ENCODE measurements at regions of chr11 and their contacts with region 1.

Region 1: DNA sequence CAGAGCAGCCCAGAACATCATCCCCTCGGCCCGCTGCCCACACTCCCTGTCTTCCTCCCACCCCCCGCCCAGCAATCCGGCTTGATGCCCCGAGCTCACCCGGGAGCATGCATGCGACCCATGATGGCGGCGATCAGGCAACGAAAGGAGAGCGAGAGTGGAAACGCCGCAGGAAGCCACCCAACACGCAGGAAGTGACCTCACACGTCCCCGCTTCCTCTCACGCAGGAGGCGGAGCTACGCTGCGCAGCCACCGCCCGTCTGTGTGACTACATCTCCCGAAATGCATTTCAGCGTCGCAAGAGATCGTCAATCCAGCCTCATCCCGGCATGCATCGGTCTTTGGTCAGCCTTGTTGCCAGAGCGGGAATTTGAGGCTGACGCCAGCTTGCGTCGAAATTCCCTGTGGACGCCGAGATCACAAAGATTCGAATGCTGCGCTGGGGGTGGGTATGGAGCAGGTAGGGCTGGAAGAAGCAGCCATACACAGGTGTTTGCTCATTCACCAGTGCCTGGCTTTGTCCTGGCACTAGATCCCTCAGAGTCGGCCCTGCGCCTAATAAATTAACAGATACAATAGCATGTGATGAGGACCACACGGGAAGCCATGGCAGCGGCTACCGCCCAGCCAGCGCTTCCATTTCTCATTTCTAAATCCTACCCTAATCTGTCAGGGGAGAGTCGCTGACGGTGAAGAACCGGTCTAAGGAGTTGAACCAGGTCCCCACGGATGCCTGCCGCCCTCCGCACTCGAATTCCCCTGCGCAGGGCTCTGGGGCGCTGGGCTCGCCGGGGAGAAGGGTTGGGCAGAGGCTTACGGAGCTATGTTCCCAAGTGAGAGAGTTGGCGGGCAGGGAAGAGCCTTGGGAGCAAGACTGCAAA is at the start of gene RPS13:
- DNase-seq: peak; percentile 94 to 97
- H3K4me3 ChIP-seq: peak within 1 kb of the TSS; percentile 99
- H3K27ac ChIP-seq: peak within 1 kb of the TSS; percentile 86
- H3K4me1 ChIP-seq: peaks cover 14% of the 10 kb centered on the region
- H3K27me3 ChIP-seq: no peaks in the 10 kb centered on the region
- CTCF ChIP-seq: no peak
- total RNA-seq, gene RPS13: 828 and 839 TPM in 2 replicates

Region 2: GRCh38 chr11:16713594-16713993 is 364.2 kb before region 1 on chr11:
- CTCF ChIA-PET with region 1: no interaction called
- POLR2A ChIA-PET with region 1: no interaction called
- intact Hi-C with region 1: no loop called
- DNase-seq: no peak
- H3K4me3 ChIP-seq: no peak overlapping the region
- H3K27ac ChIP-seq: no peak overlapping the region
- H3K4me1 ChIP-seq: no peaks in the 10 kb centered on the region
- H3K27me3 ChIP-seq: no peaks in the 10 kb centered on the region
- CTCF ChIP-seq: no peak

Region 3: DNA sequence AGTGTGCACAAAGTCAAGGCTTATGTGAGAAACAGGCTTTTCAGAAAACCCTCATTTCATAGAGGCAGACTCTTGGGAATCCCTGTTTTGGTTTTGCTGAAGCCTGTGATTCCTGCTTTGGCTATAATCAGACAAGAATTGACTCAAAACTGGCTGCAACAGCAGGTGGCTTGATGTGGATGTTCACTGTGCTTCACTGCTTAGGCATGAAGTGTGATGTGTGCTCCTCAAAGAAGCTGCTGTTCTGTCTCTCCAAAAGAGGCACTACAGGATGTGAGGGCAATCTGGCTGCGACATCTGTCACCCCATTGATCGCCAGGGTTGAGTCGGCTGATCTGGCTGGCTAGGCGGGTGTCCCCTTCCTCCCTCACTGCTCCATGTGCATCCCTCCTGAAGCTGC is 235.8 kb before region 1 on chr11:
- CTCF ChIA-PET with region 1: no interaction called
- POLR2A ChIA-PET with region 1: interaction called, 12 read pairs
- intact Hi-C with region 1: no loop called
- DNase-seq: no peak
- H3K4me3 ChIP-seq: no peak overlapping the region
- H3K27ac ChIP-seq: no peak overlapping the region
- H3K4me1 ChIP-seq: no peaks in the 10 kb centered on the region
- H3K27me3 ChIP-seq: no peaks in the 10 kb centered on the region
- CTCF ChIP-seq: no peak

Region 4: GRCh38 chr11:16924826-16925560 is 152.8 kb before region 1 on chr11:
- CTCF ChIA-PET with region 1: no interaction called
- POLR2A ChIA-PET with region 1: no interaction called
- intact Hi-C with region 1: no loop called
- DNase-seq: peak; percentile 86 to 87
- H3K4me3 ChIP-seq: peak overlapping the region; percentile 61
- H3K27ac ChIP-seq: peak overlapping the region; percentile 91
- H3K4me1 ChIP-seq: peaks cover 62% of the 10 kb centered on the region
- H3K27me3 ChIP-seq: no peaks in the 10 kb centered on the region
- CTCF ChIP-seq: no peak

Region 5: DNA sequence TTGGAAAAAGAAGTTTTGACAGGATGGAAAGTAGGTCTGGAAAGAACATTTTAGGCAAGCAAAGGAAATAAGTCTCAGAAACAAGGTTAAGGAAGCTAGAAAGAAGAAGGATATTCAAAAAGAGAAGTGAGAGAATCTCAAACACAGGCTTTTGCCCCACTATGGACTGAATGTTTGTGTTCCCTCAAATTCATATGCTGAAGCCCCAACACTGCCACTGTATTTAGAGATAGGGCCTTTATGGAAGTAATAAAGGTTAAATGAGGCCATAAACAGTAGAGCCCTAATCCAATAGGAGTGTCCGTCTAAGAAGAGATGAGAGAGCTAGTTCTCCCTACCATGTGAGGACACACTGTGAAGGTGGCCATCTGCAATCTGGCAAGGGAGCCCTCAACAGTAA is 20.3 kb after region 1 on chr11:
- CTCF ChIA-PET with region 1: no interaction called
- POLR2A ChIA-PET with region 1: interaction called, 13 read pairs
- intact Hi-C with region 1: no loop called
- DNase-seq: no peak
- H3K4me3 ChIP-seq: no peak overlapping the region
- H3K27ac ChIP-seq: no peak overlapping the region
- H3K4me1 ChIP-seq: no peaks in the 10 kb centered on the region
- H3K27me3 ChIP-seq: no peaks in the 10 kb centered on the region
- CTCF ChIP-seq: no peak

Region 6: DNA sequence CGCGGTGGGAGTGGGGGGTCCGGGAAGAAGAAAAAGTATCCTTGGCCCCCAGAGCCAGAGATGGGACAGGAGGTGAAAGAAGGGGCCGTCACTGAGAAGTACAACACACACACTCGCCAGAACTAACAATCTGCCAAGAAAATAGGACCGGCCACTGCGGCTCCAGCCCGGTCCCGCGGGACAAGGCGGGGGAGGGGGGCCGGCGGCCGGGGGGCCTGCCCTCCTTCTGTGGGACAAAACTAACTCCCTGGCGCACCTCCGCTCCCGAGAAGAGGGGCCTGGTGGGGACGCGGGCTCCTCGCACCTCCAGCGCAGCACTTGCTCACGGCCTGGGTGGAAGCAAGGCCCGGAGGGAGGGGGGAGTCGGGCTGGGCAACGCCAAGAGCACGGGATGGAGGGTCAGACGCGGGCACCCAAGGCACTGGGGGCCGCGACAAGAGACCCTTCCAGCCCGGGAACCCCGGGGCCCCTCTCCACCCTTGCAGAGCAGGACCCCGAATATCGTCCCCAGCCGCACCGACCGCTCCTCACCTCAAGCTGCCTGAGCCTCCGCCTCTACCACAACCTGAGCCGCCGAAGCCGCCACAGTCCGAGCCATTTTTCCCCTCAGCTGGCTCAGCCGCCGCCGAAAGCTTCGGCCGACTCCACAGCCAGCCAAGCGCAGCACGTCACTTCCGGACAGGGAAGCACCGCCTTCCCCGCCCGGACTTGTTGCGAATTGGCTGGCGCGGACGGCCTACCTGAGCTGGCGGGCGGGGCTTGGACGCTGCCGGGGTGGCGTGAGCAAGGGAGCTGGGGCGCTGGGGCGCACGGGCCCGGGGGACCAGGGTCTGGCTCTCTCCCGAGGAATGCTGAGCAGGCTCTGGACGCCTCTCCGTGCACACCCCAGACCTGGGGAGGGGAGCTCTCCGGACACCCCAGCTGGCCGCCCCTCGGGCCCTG is 129.8 kb after region 1 on chr11 and contains the start of gene PIK3C2A:
- CTCF ChIA-PET with region 1: no interaction called
- POLR2A ChIA-PET with region 1: interaction called, 32 read pairs
- intact Hi-C with region 1: no loop called
- DNase-seq: peak; percentile 90 to 95
- H3K4me3 ChIP-seq: peak within 1 kb of the TSS; percentile 72
- H3K27ac ChIP-seq: peak within 1 kb of the TSS; percentile 95
- H3K4me1 ChIP-seq: peaks cover 26% of the 10 kb centered on the region
- H3K27me3 ChIP-seq: no peaks in the 10 kb centered on the region
- CTCF ChIP-seq: no peak
- total RNA-seq, gene PIK3C2A: 53.8 and 70.7 TPM in 2 replicates

Measured in PC-9 (cell line).